ENCODE measurements at regions of chr5 and their contacts with region 1.

Region 1: GRCh38 chr5:177607452-177608192 is 7.7 kb downstream of the B4GALT7 start:
- DNase-seq: no peak
- H3K4me3 ChIP-seq: no peak overlapping the region
- H3K27me3 ChIP-seq: no peaks in the 10 kb centered on the region
- CTCF ChIP-seq: peak; percentile 94

Region 2: GRCh38 chr5:177576169-177576568 is 31.5 kb before region 1 on chr5:
- CTCF ChIA-PET with region 1: no interaction called
- POLR2A ChIA-PET with region 1: no interaction called
- DNase-seq: no peak
- H3K4me3 ChIP-seq: no peak overlapping the region
- H3K27me3 ChIP-seq: no peaks in the 10 kb centered on the region
- CTCF ChIP-seq: no peak

Region 3: GRCh38 chr5:177620560-177620959 is 12.9 kb after region 1 on chr5:
- CTCF ChIA-PET with region 1: interaction called, 18 read pairs
- POLR2A ChIA-PET with region 1: no interaction called
- DNase-seq: no peak
- H3K4me3 ChIP-seq: no peak overlapping the region
- H3K27me3 ChIP-seq: no peaks in the 10 kb centered on the region
- CTCF ChIP-seq: no peak

Measured in BJ (cell line).